ENCODE measurements at regions of chr9 and their contacts with region 1.

Region 1: DNA sequence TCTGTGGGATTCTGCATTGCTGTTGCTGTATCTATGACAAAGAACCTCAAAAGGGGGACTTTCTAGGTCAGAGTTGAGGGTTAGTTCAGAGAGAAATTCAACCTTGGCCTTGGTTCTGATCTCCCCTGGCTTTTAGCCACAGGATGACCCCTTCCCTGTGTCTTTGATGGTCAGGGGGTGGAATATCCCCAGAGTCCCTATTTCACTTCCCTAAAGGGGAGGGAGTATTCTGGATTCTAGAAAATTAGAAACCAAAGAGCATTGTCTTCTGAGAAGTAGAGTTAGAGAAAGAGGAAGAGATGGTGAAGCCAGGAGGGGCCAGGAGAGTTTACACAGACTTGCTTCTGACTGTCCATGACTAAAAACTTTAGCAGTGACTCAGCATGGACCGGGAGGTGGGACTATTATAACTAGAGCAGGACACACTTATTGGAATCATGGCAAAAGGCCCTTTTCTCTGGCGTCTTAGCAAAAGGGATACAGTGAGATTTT is 56.2 kb upstream of the LPAR1 start:
- DNase-seq: peak in 1 of 5 donors; percentile 38
- H3K4me3 ChIP-seq: no peak overlapping the region
- H3K27ac ChIP-seq: no peak overlapping the region
- H3K4me1 ChIP-seq: no peaks in the 10 kb centered on the region
- H3K27me3 ChIP-seq: no peaks in the 10 kb centered on the region
- CTCF ChIP-seq: no peak
- EP300 ChIP-seq: no peak
- POLR2A ChIP-seq: no peak

Region 2: GRCh38 chr9:110911659-110912418 is 182.6 kb before region 1 on chr9:
- intact Hi-C with region 1: no loop called
- DNase-seq: peak in 2 of 5 donors; percentile 16 to 56
- H3K4me3 ChIP-seq: no peak overlapping the region
- H3K27ac ChIP-seq: no peak overlapping the region
- H3K4me1 ChIP-seq: peaks cover 3% of the 10 kb centered on the region
- H3K27me3 ChIP-seq: no peaks in the 10 kb centered on the region
- CTCF ChIP-seq: no peak
- EP300 ChIP-seq: no peak
- POLR2A ChIP-seq: no peak

Region 3: DNA sequence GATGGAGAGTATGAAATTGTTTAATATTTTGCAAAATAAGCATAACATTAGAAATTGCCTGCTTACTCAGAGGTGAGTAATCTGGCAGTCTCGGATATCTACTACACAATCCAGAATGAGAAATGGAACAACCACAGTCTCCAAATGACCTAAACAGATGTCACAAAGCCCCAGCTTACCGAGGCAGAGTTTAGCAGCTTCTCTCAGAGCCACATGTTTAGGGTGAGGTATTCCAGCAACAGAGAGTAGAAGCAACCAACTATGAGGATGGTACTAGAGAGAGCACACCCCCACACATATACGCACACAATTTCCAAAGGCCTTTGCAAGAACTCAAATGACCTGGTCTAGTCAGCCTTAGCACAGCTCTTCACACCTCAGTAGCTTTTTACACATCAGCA is 66.5 kb after region 1 on chr9:
- intact Hi-C with region 1: no loop called
- DNase-seq: no peak
- H3K4me3 ChIP-seq: no peak overlapping the region
- H3K27ac ChIP-seq: no peak overlapping the region
- H3K4me1 ChIP-seq: no peaks in the 10 kb centered on the region
- H3K27me3 ChIP-seq: no peaks in the 10 kb centered on the region
- CTCF ChIP-seq: no peak
- EP300 ChIP-seq: no peak
- POLR2A ChIP-seq: no peak

Region 4: DNA sequence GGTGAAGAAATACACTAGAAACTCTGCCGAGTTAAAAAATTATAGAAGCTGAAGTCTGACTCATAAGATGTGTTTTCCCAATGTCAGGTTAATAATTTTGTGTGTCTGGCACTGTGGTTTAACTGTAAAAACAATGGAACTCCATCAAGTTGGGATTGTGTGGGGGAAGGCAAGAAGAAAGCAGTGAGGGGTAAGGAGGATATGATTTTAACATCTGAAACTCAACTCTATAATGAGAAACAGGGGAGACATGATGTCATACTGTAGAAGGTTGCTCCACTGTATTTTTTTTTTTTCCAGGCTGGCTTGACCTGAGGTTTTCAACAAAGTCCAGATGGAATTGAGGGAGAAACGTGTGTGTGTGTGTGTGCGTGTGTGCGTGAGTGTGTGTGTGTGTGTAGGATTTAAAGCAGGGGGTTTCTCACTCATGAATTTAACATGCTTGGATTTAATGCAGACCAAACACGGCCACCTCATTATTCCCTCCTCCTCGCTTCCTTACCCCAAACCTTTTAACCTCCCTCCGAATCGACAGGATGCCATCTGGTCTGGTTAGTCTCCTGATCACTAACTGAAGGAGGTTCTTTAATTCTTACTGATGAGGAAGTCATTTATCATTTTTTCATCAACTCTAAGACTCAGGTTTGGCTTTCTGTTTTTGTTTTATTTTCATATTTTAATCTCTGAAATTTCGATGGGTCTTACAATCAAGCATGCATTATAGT is 84.0 kb after region 1 on chr9:
- intact Hi-C with region 1: loop called in 1 of 4 experiments (anchors 10 kb)
- DNase-seq: no peak
- H3K4me3 ChIP-seq: no peak overlapping the region
- H3K27ac ChIP-seq: no peak overlapping the region
- H3K4me1 ChIP-seq: no peaks in the 10 kb centered on the region
- H3K27me3 ChIP-seq: no peaks in the 10 kb centered on the region
- CTCF ChIP-seq: no peak
- EP300 ChIP-seq: no peak
- POLR2A ChIP-seq: no peak

Measured in ovary (tissue), 10 donors.